ENCODE measurements at regions of chr1 and their contacts with region 1.

Region 1: DNA sequence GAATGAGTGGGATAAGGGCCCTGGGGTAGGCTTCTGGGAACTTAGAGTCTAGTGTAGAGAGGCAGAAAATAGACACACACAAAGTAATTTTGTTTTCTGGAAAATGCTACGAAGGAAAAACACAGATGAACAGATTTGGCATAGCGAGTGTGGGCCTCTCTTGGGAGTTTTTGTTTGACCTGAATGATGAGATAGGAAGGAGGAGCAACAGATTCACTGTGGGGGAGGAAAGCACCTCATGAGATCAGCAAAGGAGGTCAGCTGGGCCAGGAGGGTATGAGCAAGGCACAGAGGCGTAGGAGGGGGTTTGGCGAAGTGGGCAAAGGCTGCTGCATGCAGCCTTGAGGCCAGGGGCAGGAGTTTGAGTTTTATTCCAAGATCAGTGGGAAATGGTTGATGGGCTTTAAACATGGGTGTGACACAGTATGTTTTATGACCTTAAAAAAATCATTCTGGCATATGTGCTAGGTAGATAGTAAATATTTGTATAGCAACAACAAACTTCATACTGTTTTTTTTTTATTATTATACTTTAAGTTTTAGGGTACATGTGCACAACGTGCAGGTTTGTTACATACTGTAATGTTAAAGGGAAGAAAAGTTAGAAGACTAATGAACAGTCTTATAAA is 57.9 kb downstream of the FGGY start:
- DNase-seq: peak; percentile 72 to 86
- H3K4me3 ChIP-seq: no peak overlapping the region
- H3K27ac ChIP-seq: peak overlapping the region; percentile 84 to 86
- H3K4me1 ChIP-seq: peaks cover 0 to 8% of the 10 kb centered on the region in 2 donors
- H3K27me3 ChIP-seq: no peaks in the 10 kb centered on the region
- CTCF ChIP-seq: no peak
- POLR2A ChIP-seq: no peak

Region 2: GRCh38 chr1:59296358-59297256 is 58.2 kb before region 1 on chr1 and contains the start of gene FGGY:
- intact Hi-C with region 1: loop called (anchors 10 kb)
- DNase-seq: peak; percentile 96 to 98
- H3K4me3 ChIP-seq: peak within 1 kb of the TSS; percentile 43 to 51
- H3K27ac ChIP-seq: peak within 1 kb of the TSS; percentile 96 to 99
- H3K4me1 ChIP-seq: no peaks in the 10 kb centered on the region
- H3K27me3 ChIP-seq: no peaks in the 10 kb centered on the region
- CTCF ChIP-seq: peak in 1 of 4 experiments; percentile 29
- POLR2A ChIP-seq: peak; percentile 67 to 81
- total RNA-seq, gene FGGY: 20.6 to 138 (median 32.8) TPM

Region 3: DNA sequence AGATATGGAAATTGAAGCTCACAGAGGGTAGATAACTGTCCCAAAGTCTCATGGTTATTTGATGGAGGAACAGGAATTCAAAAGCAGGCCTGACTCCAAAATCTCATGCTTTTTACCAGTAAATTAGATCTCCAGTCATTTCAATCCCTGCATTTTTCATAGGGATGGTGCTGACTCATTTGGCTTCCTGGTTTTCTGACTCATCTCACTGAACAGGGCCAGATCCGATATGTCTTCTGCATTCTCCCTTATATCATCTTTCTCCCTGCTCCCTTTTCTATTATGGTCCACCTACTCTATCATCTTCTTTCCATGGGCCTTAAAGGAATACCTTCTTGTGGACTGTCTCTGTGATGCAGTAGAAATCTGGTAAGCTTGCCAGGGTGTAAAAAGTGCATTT is 129.3 kb after region 1 on chr1:
- intact Hi-C with region 1: no loop called
- DNase-seq: peak in 1 of 2 donors; percentile 61
- H3K4me3 ChIP-seq: no peak overlapping the region
- H3K27ac ChIP-seq: peak overlapping the region; percentile 16 to 41
- H3K4me1 ChIP-seq: no peaks in the 10 kb centered on the region
- H3K27me3 ChIP-seq: no peaks in the 10 kb centered on the region
- CTCF ChIP-seq: no peak
- POLR2A ChIP-seq: no peak

Region 4: DNA sequence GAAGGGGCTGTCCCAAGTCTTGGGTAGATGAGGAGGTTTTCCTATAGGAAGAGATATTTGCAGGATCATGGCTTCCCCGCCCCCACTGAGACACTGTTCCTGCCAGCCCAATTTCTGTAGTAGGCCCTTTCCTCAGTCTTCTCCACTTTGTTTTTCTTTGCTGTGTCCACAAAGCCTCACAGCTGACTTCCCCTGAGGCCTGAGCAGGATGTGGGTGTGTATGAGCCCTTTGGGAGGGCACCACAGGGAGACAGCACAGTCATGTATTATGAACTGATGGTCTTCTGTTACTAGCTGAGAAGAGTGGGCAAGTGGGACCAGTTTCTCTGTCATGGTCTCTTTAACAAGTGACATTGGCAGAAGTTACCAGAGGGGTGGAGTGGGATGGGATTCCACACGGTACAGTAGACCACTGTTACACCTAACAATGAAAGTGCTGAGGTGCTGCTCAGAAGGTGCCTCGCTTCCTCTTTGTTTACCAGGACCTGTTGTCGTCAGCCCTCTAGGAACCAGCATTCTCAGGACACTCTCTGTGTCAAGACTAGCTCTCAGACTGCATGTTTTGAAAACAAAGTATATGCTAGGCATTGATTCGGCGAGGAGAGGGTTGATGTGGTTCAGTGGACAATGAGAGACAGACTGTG is 206.1 kb after region 1 on chr1:
- intact Hi-C with region 1: no loop called
- DNase-seq: no peak
- H3K4me3 ChIP-seq: no peak overlapping the region
- H3K27ac ChIP-seq: no peak overlapping the region
- H3K4me1 ChIP-seq: no peaks in the 10 kb centered on the region
- H3K27me3 ChIP-seq: no peaks in the 10 kb centered on the region
- CTCF ChIP-seq: no peak
- POLR2A ChIP-seq: no peak